ENCODE measurements at regions of chr6 and their contacts with region 1.

Region 1: DNA sequence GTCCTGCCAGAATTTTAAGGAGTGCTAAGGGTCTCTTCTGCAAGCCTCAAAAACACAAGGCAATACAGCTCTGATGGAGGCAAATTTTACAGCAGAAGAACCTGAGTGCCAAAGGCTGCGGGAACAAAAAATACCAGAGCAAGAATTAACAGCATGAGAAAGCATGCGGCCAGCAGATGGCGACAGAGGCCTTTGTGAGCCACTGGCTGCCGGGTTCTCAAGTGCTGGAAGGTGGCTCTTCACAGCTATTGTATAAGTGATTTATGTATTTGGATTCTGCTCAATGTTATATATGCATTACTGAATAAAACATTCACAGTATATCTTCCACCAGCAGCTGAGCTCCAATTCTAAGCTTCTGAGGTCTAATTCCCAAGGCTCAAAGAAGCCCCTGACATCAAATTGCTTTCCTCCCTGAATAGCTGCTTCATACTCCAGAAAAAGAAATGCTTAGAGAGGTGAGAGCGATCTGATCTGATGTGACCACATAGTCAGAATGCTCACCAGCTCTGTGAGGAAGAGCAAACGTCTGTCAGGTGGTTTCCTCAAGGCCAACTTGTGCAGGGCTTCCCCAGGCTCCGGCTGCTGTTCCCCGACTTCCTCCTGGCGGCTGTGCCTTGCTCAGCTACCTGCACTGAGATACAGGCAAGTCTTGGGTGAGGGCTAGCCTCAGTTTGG is 58.6 kb downstream of the PPP1R3G start:
- DNase-seq: peak; percentile 61 to 86 (median 73)
- ATAC-seq: peak; percentile 84
- H3K4me3 ChIP-seq: no peak overlapping the region
- H3K4me3 Mint-ChIP-seq: no peak overlapping the region
- H3K27ac ChIP-seq: no peak overlapping the region
- H3K27ac Mint-ChIP-seq: peak overlapping the region in 2 of 9 donors; percentile 18 to 25
- H3K4me1 ChIP-seq: no peaks in the 10 kb centered on the region
- H3K4me1 Mint-ChIP-seq: peaks cover 0 to 7% (median 5%) of the 10 kb centered on the region in 7 donors
- H3K27me3 ChIP-seq: no peaks in the 10 kb centered on the region
- H3K27me3 Mint-ChIP-seq: no peaks in the 10 kb centered on the region

Region 2: GRCh38 chr6:5214570-5215052 is 70.8 kb after region 1 on chr6:
- CTCF ChIA-PET with region 1: no interaction called
- POLR2A ChIA-PET with region 1: no interaction called
- intact Hi-C with region 1: loop called in 1 of 2 experiments (anchors 10 kb)
- DNase-seq: peak in 2 of 9 donors; percentile 5 to 32
- ATAC-seq: no peak
- H3K4me3 ChIP-seq: no peak overlapping the region
- H3K4me3 Mint-ChIP-seq: no peak overlapping the region
- H3K27ac ChIP-seq: no peak overlapping the region
- H3K27ac Mint-ChIP-seq: no peak overlapping the region
- H3K4me1 ChIP-seq: no peaks in the 10 kb centered on the region
- H3K4me1 Mint-ChIP-seq: peaks cover 0 to 5% (median 0%) of the 10 kb centered on the region in 7 donors
- H3K27me3 ChIP-seq: no peaks in the 10 kb centered on the region
- H3K27me3 Mint-ChIP-seq: no peaks in the 10 kb centered on the region

Region 3: DNA sequence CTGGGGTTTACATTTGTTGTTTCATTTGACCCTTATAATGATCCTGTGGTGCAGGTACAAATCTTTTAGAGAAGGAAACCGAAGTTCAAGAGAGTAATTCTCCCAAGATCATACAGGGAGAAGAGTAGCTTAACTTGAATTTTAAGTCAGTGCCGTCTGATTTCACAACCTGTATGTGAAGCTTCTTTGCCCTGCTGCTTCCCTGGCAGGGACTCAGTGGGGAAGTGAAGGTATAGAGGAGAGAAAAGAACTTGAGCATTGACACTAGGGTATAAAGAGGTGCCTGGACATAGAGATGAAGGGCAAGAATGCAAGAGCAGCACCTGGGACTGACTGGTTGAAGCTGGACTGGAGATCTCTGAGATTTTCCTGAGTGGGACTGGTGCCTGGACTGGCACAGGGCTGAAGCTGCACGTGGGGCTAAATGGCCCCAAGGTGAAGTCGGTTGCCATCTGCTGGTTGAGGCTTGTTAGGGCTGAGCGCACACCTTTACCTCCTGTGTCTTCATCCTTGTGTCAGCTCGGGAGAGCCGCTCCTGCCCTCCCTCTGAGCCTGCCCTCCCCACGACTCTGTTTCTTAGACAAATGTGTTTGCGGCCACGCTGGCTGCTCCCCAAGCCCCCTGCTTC is 159.3 kb after region 1 on chr6:
- CTCF ChIA-PET with region 1: interaction called, 28 read pairs
- POLR2A ChIA-PET with region 1: no interaction called
- intact Hi-C with region 1: loop called (anchors 1 kb)
- DNase-seq: peak; percentile 8 to 53 (median 36)
- ATAC-seq: peak; percentile 90
- H3K4me3 ChIP-seq: peak overlapping the region; percentile 10
- H3K4me3 Mint-ChIP-seq: peak overlapping the region in 5 of 10 donors; percentile 3 to 36 (median 22)
- H3K27ac ChIP-seq: no peak overlapping the region
- H3K27ac Mint-ChIP-seq: peak overlapping the region in 5 of 9 donors; percentile 3 to 48 (median 15)
- H3K4me1 ChIP-seq: peaks cover 5 to 13% of the 10 kb centered on the region in 2 donors
- H3K4me1 Mint-ChIP-seq: peaks cover 20 to 58% (median 42%) of the 10 kb centered on the region in 7 donors
- H3K27me3 ChIP-seq: no peaks in the 10 kb centered on the region
- H3K27me3 Mint-ChIP-seq: no peaks in the 10 kb centered on the region

Region 4: GRCh38 chr6:5398530-5398929 is 254.8 kb after region 1 on chr6:
- CTCF ChIA-PET with region 1: interaction called, 4 read pairs
- POLR2A ChIA-PET with region 1: no interaction called
- intact Hi-C with region 1: loop called (anchors 1 kb)
- DNase-seq: peak in 6 of 9 donors; percentile 17 to 43 (median 33)
- ATAC-seq: peak; percentile 71
- H3K4me3 ChIP-seq: no peak overlapping the region
- H3K4me3 Mint-ChIP-seq: no peak overlapping the region
- H3K27ac ChIP-seq: no peak overlapping the region
- H3K27ac Mint-ChIP-seq: no peak overlapping the region
- H3K4me1 ChIP-seq: no peaks in the 10 kb centered on the region
- H3K4me1 Mint-ChIP-seq: peaks cover 3 to 18% (median 9%) of the 10 kb centered on the region in 7 donors
- H3K27me3 ChIP-seq: no peaks in the 10 kb centered on the region
- H3K27me3 Mint-ChIP-seq: no peaks in the 10 kb centered on the region

Region 5: DNA sequence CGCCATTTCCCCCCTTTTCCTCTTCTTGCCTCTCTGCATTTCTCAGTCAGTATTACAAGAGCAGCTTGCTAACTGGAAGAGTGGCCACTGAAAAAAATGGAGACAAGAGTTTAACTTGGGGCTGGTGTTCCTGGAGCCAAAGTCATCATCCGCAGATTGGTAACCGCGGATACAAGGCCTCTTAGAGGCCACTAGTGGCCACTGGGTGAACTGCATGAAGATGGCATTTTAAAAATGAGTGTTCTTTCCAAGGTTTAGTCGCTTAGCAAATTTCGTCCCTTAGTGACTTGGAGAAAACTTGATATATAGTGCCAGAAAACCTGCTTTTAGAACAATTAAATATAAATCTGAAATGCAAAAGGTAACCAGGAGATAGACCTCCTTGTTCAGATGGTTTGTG is 1171.9 kb after region 1 on chr6:
- CTCF ChIA-PET with region 1: no interaction called
- POLR2A ChIA-PET with region 1: no interaction called
- intact Hi-C with region 1: loop called in 1 of 2 experiments (anchors 1 kb)
- DNase-seq: peak in 4 of 9 donors; percentile 11 to 27 (median 20)
- ATAC-seq: peak; percentile 57
- H3K4me3 ChIP-seq: no peak overlapping the region
- H3K4me3 Mint-ChIP-seq: no peak overlapping the region
- H3K27ac ChIP-seq: no peak overlapping the region
- H3K27ac Mint-ChIP-seq: peak overlapping the region in 1 of 9 donors; percentile 47
- H3K4me1 ChIP-seq: no peaks in the 10 kb centered on the region
- H3K4me1 Mint-ChIP-seq: peaks cover 0 to 5% (median 0%) of the 10 kb centered on the region in 7 donors
- H3K27me3 ChIP-seq: no peaks in the 10 kb centered on the region
- H3K27me3 Mint-ChIP-seq: peaks cover 34 to 52% (median 51%) of the 10 kb centered on the region in 5 donors